B cell (primary cell): ENCODE measurements at regions of chr2 and their contacts with region 1.

Region 1: DNA sequence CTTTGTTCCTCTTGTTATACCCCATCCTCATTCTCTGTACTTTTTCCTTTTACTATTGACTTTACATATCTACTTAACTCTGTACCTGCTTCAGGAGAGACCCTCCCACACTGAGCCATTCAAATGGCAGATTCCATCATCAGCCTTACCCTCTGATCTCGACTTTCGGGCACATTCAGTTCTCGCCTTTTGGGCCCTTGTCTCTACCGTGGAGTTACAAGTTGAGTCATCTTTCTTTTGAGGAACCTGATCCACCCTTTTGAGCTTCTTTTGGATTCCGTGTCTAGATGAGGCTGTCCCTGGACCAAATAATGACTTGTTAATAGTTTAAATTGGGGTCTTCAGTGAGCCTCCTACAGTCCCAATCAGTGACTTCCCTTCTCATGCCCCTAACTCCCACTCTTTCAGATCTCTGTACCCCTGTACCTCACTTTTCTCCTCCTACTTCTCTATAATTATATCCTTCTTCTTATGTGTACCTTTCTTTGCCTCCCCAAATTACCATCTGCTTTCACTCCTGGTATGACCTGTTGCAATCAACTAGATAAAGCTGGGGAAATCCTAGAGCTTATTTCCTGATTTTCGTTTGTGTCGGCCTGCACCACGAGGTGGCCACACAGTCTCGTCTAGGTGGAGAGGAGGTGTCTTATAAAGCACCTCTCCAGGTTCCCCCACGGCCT is 17.2 kb downstream of the SP110 start:
- DNase-seq: peak; percentile 79
- ATAC-seq: peak; percentile 61
- H3K4me3 ChIP-seq: no peak overlapping the region
- H3K4me3 Mint-ChIP-seq: peak overlapping the region; percentile 74
- H3K27ac ChIP-seq: peak overlapping the region; percentile 9 to 72
- H3K27ac Mint-ChIP-seq: peak overlapping the region; percentile 87
- H3K4me1 ChIP-seq: peaks cover 51 to 55% of the 10 kb centered on the region in 2 donors
- H3K4me1 Mint-ChIP-seq: peaks cover 39% of the 10 kb centered on the region
- H3K27me3 ChIP-seq: no peaks in the 10 kb centered on the region
- H3K27me3 Mint-ChIP-seq: no peaks in the 10 kb centered on the region
- CTCF ChIP-seq: peak; percentile 64

Region 2: DNA sequence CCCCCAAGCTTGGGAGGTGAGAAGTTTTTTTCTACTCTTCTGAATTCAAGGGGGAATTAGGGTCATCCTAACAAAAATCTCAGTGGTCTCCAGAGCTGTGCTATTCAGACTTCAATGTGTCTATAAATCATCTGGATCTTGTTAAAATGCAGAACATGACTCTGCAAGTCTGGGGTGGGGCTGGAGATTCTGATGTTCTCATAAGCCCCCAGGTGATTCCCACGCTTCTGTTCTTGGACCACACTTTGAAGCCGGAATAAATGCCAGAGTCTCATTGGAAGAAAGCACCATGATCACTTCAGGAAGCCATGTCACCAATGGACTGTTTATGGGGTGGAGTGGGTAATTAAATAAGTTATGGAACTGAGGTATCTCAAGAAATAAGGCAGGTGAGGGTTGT is 111.6 kb before region 1 on chr2:
- CTCF ChIA-PET with region 1: no interaction called
- POLR2A ChIA-PET with region 1: no interaction called
- intact Hi-C with region 1: no loop called
- DNase-seq: no peak
- ATAC-seq: no peak
- H3K4me3 ChIP-seq: no peak overlapping the region
- H3K4me3 Mint-ChIP-seq: no peak overlapping the region
- H3K27ac ChIP-seq: no peak overlapping the region
- H3K27ac Mint-ChIP-seq: no peak overlapping the region
- H3K4me1 ChIP-seq: no peaks in the 10 kb centered on the region
- H3K4me1 Mint-ChIP-seq: no peaks in the 10 kb centered on the region
- H3K27me3 ChIP-seq: peaks cover 0 to 2% (median 0%) of the 10 kb centered on the region in 4 experiments
- H3K27me3 Mint-ChIP-seq: peaks cover 26% of the 10 kb centered on the region
- CTCF ChIP-seq: no peak

Region 3: GRCh38 chr2:230124757-230125431 is 77.7 kb before region 1 on chr2:
- CTCF ChIA-PET with region 1: no interaction called
- POLR2A ChIA-PET with region 1: no interaction called
- intact Hi-C with region 1: no loop called
- DNase-seq: peak; percentile 17
- ATAC-seq: no peak
- H3K4me3 ChIP-seq: peak overlapping the region in 1 of 5 experiments; percentile 1
- H3K4me3 Mint-ChIP-seq: peak overlapping the region; percentile 62
- H3K27ac ChIP-seq: no peak overlapping the region
- H3K27ac Mint-ChIP-seq: no peak overlapping the region
- H3K4me1 ChIP-seq: peaks cover 11 to 14% of the 10 kb centered on the region in 2 donors
- H3K4me1 Mint-ChIP-seq: peaks cover 16% of the 10 kb centered on the region
- H3K27me3 ChIP-seq: no peaks in the 10 kb centered on the region
- H3K27me3 Mint-ChIP-seq: no peaks in the 10 kb centered on the region
- CTCF ChIP-seq: no peak

Region 4: DNA sequence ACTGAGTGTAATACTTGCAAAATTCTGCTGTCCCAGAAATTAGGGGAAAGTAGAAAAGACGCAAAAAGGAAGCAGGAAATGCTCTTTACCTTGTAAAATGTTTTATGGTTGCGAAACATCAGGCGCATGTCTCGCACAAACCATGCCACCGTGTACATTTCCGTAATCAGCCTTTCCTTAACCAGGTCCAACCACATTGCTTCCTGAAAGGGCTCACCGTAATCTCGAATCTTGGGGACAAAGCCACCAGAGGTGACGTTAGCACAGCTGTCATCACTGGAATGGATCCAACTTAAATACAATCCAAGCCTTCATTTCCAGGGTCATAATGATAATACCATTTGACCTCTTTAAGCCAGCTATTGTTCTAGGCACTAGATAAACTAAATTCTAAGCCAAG is 32.0 kb before region 1 on chr2:
- CTCF ChIA-PET with region 1: no interaction called
- POLR2A ChIA-PET with region 1: no interaction called
- intact Hi-C with region 1: no loop called
- DNase-seq: no peak
- ATAC-seq: no peak
- H3K4me3 ChIP-seq: no peak overlapping the region
- H3K4me3 Mint-ChIP-seq: no peak overlapping the region
- H3K27ac ChIP-seq: no peak overlapping the region
- H3K27ac Mint-ChIP-seq: no peak overlapping the region
- H3K4me1 ChIP-seq: no peaks in the 10 kb centered on the region
- H3K4me1 Mint-ChIP-seq: no peaks in the 10 kb centered on the region
- H3K27me3 ChIP-seq: no peaks in the 10 kb centered on the region
- H3K27me3 Mint-ChIP-seq: no peaks in the 10 kb centered on the region
- CTCF ChIP-seq: no peak

Region 5: DNA sequence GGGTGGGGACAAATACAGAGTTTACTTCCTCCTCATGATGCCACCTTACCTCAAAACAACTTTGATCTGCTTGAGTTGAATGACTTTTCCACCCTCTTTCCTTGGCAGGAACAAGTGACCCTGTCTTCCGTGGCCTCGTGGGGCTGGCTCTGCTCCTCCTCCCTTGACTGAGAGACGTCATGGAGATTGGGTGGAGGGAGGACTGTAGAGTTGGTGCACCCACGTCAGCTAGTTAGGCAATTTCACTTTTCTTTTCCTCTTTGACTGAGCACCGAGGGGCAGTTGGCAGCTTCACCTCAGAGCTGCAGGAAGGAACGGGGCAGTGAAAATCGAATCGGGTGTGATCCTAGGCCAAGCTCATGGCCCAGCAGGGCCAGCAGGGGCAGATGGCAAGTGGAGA is 22.9 kb after region 1 on chr2 and contains the start of gene SP140:
- CTCF ChIA-PET with region 1: interaction called, 44 read pairs
- POLR2A ChIA-PET with region 1: interaction called, 10 read pairs
- intact Hi-C with region 1: loop called (anchors 1 kb)
- DNase-seq: peak; percentile 91
- ATAC-seq: peak; percentile 77
- H3K4me3 ChIP-seq: peak within 1 kb of the TSS; percentile 51 to 96 (median 72)
- H3K4me3 Mint-ChIP-seq: peak within 1 kb of the TSS; percentile 88
- H3K27ac ChIP-seq: peak within 1 kb of the TSS; percentile 86 to 87
- H3K27ac Mint-ChIP-seq: peak within 1 kb of the TSS; percentile 96
- H3K4me1 ChIP-seq: peaks cover 58 to 74% of the 10 kb centered on the region in 2 donors
- H3K4me1 Mint-ChIP-seq: peaks cover 76% of the 10 kb centered on the region
- H3K27me3 ChIP-seq: no peaks in the 10 kb centered on the region
- H3K27me3 Mint-ChIP-seq: no peaks in the 10 kb centered on the region
- CTCF ChIP-seq: no peak
- total RNA-seq, gene SP140: 411 and 424 TPM in 2 replicates

Region 6: DNA sequence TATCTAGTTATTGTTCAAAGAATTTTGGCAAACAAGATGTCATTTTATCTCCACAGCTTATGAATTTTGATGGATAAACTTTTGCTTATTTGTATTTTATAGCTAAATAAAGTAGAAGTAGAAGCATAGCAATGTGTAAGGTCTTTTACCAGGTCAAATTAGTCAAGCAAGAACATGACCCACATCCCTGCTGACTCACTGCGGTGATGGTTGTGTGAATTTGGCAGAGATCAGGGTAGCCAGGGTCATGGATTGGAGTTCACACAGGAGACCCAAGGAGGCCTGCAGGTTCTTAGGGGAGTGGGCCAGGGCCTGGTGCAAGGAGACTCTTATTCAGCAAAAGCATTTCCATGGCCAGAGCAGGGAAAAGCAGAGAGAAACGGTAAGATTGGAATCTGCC is 41.6 kb after region 1 on chr2:
- CTCF ChIA-PET with region 1: interaction called, 14 read pairs
- POLR2A ChIA-PET with region 1: no interaction called
- intact Hi-C with region 1: no loop called
- DNase-seq: no peak
- ATAC-seq: no peak
- H3K4me3 ChIP-seq: no peak overlapping the region
- H3K4me3 Mint-ChIP-seq: no peak overlapping the region
- H3K27ac ChIP-seq: no peak overlapping the region
- H3K27ac Mint-ChIP-seq: no peak overlapping the region
- H3K4me1 ChIP-seq: no peaks in the 10 kb centered on the region
- H3K4me1 Mint-ChIP-seq: no peaks in the 10 kb centered on the region
- H3K27me3 ChIP-seq: no peaks in the 10 kb centered on the region
- H3K27me3 Mint-ChIP-seq: no peaks in the 10 kb centered on the region
- CTCF ChIP-seq: no peak

Region 7: DNA sequence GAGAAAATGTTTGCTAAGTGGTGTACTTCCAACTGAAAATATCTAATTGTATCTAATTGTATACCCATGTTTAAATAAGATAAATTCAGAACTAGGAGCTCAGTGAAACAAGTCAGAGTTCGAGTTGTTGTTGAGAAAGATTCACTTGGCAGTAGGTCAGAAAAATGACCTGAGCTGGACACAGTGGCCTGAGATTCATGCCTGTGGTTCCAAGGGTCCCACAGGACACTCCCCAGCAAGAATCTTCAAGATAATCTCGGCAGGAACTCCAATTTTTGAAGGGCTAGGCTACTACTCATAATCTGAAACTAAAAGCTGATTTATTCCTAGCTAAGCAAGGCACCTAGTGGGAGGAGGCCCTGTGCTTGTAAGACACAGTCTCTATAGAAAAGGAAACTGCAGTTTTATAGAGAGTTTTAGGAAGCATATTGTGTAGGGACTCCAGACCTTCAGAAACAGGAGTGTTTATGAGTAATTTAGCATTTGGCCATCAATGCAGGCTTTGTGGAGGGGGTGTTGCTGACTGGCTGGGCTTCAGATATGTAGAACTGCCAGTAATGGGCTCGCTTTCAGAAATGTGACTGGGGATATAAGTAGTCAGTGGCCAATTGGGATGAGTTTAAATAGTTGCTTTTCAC is 66.2 kb after region 1 on chr2:
- CTCF ChIA-PET with region 1: interaction called, 14 read pairs
- POLR2A ChIA-PET with region 1: interaction called, 4 read pairs
- intact Hi-C with region 1: loop called (anchors 2 kb)
- DNase-seq: no peak
- ATAC-seq: no peak
- H3K4me3 ChIP-seq: no peak overlapping the region
- H3K4me3 Mint-ChIP-seq: peak overlapping the region; percentile 54
- H3K27ac ChIP-seq: peak overlapping the region; percentile 1 to 31
- H3K27ac Mint-ChIP-seq: peak overlapping the region; percentile 84
- H3K4me1 ChIP-seq: peaks cover 32 to 38% of the 10 kb centered on the region in 2 donors
- H3K4me1 Mint-ChIP-seq: peaks cover 64% of the 10 kb centered on the region
- H3K27me3 ChIP-seq: no peaks in the 10 kb centered on the region
- H3K27me3 Mint-ChIP-seq: no peaks in the 10 kb centered on the region
- CTCF ChIP-seq: no peak

Region 8: DNA sequence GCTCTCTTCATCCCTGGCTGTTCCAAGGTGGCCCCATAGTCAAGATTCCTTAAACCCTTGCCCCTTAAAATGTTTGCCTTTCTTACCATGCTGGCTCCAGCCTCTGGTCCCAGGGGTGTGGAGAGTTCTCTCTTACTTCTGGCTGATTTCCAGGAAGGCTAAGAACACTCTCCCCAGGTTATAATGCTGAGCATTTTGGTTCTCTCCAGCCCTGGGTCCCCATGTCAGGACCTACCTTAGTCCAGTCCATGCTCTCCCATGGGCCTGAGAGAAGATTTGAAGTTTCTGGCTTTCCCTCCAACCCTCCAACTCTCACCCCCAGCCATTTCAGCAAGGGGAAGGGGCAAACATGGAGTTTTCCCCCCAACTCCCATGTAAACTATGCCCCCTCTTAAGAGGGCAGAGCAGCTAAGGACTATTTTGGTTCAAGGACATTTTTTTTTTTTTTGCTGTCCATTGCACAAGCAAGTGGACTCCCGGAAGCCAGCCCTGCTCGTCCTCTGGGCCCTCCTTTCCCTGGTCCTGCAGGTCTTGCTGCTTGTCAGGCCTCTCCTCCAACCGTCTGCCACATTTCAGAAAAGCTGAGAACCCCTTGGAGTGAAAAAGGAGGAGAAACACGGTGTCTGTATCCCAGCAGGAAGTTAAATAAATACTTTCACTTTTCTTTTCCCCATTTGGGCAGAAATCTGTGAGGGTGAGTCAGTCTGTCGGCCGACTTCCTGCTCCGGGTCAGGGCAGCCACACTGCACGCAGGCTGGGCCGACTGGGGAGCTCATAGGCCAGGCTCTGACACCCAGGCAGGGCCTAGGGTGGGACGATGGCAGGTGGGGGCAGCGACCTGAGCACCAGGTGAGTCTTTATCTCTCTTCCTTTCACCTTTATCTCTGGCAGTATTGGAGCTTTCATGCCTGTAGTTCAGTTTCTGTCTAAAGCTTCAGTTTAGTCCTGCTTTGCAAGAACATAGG is 124.2 kb after region 1 on chr2 and contains the start of gene SP140L:
- CTCF ChIA-PET with region 1: interaction called, 14 read pairs
- POLR2A ChIA-PET with region 1: no interaction called
- intact Hi-C with region 1: loop called (anchors 2 kb)
- DNase-seq: peak; percentile 78
- ATAC-seq: peak; percentile 94
- H3K4me3 ChIP-seq: peak within 1 kb of the TSS; percentile 62 to 83 (median 72)
- H3K4me3 Mint-ChIP-seq: peak within 1 kb of the TSS; percentile 98
- H3K27ac ChIP-seq: peak within 1 kb of the TSS; percentile 95
- H3K27ac Mint-ChIP-seq: peak within 1 kb of the TSS; percentile 99
- H3K4me1 ChIP-seq: peaks cover 52 to 72% of the 10 kb centered on the region in 2 donors
- H3K4me1 Mint-ChIP-seq: peaks cover 73% of the 10 kb centered on the region
- H3K27me3 ChIP-seq: no peaks in the 10 kb centered on the region
- H3K27me3 Mint-ChIP-seq: no peaks in the 10 kb centered on the region
- CTCF ChIP-seq: no peak
- total RNA-seq, gene SP140L: 154 and 167 TPM in 2 replicates